CD4-positive, alpha-beta memory T cell (primary cell): ENCODE measurements at regions of chr12 and their contacts with region 1.

Region 1: DNA sequence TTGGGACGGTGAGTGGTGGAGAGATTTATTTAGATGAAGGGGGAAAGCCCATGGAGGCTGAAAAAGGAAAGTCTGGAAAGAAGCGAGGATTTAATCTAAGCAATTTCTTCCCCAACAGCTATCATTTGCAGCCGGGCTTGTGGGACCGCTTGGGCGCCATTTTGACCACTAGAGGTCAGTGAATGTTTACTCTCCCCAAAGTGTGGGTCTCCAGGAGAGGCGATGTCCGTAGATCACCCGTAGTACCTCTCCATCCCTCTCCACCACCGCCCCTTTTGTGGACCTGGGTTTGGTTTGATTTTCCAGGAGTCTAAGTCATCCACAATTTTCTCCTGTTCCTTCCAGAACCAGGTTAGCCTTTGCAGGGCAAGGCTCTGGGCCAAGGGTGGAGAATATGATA is 91.2 kb upstream of the PARP11 start:
- DNase-seq: no peak
- H3K4me3 ChIP-seq: no peak overlapping the region
- H3K4me3 Mint-ChIP-seq: no peak overlapping the region
- H3K27ac ChIP-seq: no peak overlapping the region
- H3K27ac Mint-ChIP-seq: peak overlapping the region in 4 of 7 donors; percentile 8 to 83 (median 48)
- H3K4me1 ChIP-seq: peaks cover 20% of the 10 kb centered on the region
- H3K4me1 Mint-ChIP-seq: peaks cover 18 to 37% (median 26%) of the 10 kb centered on the region in 4 donors
- H3K27me3 ChIP-seq: no peaks in the 10 kb centered on the region
- H3K27me3 Mint-ChIP-seq: no peaks in the 10 kb centered on the region

Region 2: DNA sequence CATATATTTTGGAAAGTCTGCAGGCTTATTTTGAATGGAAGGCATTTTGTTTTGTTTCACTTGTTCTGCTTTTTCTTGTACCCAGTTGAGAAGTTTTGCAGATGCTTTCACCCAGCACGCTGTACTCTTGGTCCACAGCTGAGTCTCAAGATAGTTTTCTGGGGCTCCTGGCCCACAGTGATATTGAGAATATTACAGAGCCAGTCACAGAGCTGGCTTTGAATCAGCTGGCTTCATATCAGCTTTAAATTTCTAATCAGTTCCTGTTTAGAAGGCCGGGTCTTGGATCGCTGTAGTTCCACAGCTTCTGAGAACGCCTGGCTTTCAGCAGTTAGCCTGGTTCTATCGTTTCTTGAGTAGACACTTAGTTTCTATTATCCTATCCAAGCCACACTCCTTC is 58.8 kb before region 1 on chr12:
- CTCF ChIA-PET with region 1: interaction called, 46 read pairs
- POLR2A ChIA-PET with region 1: interaction called, 18 read pairs
- intact Hi-C with region 1: no loop called
- DNase-seq: no peak
- H3K4me3 ChIP-seq: peak overlapping the region; percentile 34 to 36
- H3K4me3 Mint-ChIP-seq: peak overlapping the region; percentile 57 to 91 (median 86)
- H3K27ac ChIP-seq: peak overlapping the region; percentile 20
- H3K27ac Mint-ChIP-seq: peak overlapping the region; percentile 63 to 94 (median 83)
- H3K4me1 ChIP-seq: peaks cover 33% of the 10 kb centered on the region
- H3K4me1 Mint-ChIP-seq: peaks cover 23 to 45% (median 30%) of the 10 kb centered on the region in 4 donors
- H3K27me3 ChIP-seq: no peaks in the 10 kb centered on the region
- H3K27me3 Mint-ChIP-seq: no peaks in the 10 kb centered on the region

Region 3: DNA sequence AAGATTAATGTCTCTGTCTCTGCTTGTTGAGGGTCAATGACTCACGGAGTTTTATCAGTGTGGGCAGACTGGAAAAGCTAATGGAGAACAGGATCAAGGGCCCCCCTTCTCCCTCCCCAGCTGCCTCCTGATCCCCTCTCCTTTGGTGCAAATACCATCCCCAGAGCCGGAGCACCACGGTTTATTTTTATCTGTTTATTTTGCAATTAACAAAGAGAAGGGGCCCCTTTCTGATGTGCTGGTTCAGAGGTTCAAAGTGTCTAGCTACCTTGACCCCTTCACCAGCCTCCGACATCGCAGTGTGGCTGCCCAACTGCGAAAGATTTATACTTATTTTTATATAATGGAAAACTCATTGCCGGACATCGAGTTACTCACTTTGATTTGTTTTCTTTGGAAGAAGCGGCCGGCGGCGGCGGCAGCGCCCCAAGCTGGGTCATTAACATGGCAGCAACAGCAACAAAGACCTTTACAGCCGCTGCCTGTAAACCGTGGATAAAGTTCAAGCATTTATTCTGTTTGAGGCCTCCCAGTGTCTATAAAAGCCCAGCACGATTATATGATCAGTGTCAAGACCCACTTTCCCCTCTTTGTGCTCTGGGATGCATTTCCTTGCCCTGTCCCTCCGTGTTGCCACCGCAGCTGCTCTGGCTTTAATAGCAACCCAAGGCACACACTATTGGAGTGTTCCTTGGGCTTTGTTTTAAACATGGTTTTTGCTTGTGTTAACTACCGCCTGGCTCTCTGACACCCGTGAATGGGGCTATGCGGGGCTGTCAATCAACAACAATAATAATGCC is 43.9 kb before region 1 on chr12:
- CTCF ChIA-PET with region 1: interaction called, 25 read pairs
- POLR2A ChIA-PET with region 1: interaction called, 10 read pairs
- intact Hi-C with region 1: no loop called
- DNase-seq: no peak
- H3K4me3 ChIP-seq: no peak overlapping the region
- H3K4me3 Mint-ChIP-seq: no peak overlapping the region
- H3K27ac ChIP-seq: no peak overlapping the region
- H3K27ac Mint-ChIP-seq: no peak overlapping the region
- H3K4me1 ChIP-seq: peaks cover 9% of the 10 kb centered on the region
- H3K4me1 Mint-ChIP-seq: peaks cover 13 to 20% (median 16%) of the 10 kb centered on the region in 4 donors
- H3K27me3 ChIP-seq: no peaks in the 10 kb centered on the region
- H3K27me3 Mint-ChIP-seq: no peaks in the 10 kb centered on the region

Region 4: GRCh38 chr12:3935078-3935477 is 29.4 kb before region 1 on chr12:
- CTCF ChIA-PET with region 1: interaction called, 36 read pairs
- POLR2A ChIA-PET with region 1: interaction called, 24 read pairs
- intact Hi-C with region 1: loop called (anchors 1 kb)
- DNase-seq: peak in 4 of 5 donors; percentile 51 to 69 (median 58)
- H3K4me3 ChIP-seq: peak overlapping the region; percentile 21 to 32
- H3K4me3 Mint-ChIP-seq: peak overlapping the region; percentile 27 to 97 (median 84)
- H3K27ac ChIP-seq: no peak overlapping the region
- H3K27ac Mint-ChIP-seq: peak overlapping the region; percentile 39 to 99 (median 92)
- H3K4me1 ChIP-seq: peaks cover 55% of the 10 kb centered on the region
- H3K4me1 Mint-ChIP-seq: peaks cover 43 to 72% (median 54%) of the 10 kb centered on the region in 4 donors
- H3K27me3 ChIP-seq: no peaks in the 10 kb centered on the region
- H3K27me3 Mint-ChIP-seq: no peaks in the 10 kb centered on the region

Region 5: GRCh38 chr12:3988519-3989448 is 24.3 kb after region 1 on chr12:
- CTCF ChIA-PET with region 1: interaction called, 49 read pairs
- POLR2A ChIA-PET with region 1: interaction called, 37 read pairs
- intact Hi-C with region 1: no loop called
- DNase-seq: peak in 4 of 5 donors; percentile 40 to 50 (median 43)
- H3K4me3 ChIP-seq: peak overlapping the region in 1 of 2 donors; percentile 2
- H3K4me3 Mint-ChIP-seq: peak overlapping the region in 7 of 8 donors; percentile 45 to 88 (median 66)
- H3K27ac ChIP-seq: peak overlapping the region; percentile 6
- H3K27ac Mint-ChIP-seq: peak overlapping the region; percentile 56 to 94 (median 90)
- H3K4me1 ChIP-seq: peaks cover 24% of the 10 kb centered on the region
- H3K4me1 Mint-ChIP-seq: peaks cover 18 to 33% (median 25%) of the 10 kb centered on the region in 4 donors
- H3K27me3 ChIP-seq: no peaks in the 10 kb centered on the region
- H3K27me3 Mint-ChIP-seq: peaks cover 0 to 2% of the 10 kb centered on the region in 2 donors

Region 6: DNA sequence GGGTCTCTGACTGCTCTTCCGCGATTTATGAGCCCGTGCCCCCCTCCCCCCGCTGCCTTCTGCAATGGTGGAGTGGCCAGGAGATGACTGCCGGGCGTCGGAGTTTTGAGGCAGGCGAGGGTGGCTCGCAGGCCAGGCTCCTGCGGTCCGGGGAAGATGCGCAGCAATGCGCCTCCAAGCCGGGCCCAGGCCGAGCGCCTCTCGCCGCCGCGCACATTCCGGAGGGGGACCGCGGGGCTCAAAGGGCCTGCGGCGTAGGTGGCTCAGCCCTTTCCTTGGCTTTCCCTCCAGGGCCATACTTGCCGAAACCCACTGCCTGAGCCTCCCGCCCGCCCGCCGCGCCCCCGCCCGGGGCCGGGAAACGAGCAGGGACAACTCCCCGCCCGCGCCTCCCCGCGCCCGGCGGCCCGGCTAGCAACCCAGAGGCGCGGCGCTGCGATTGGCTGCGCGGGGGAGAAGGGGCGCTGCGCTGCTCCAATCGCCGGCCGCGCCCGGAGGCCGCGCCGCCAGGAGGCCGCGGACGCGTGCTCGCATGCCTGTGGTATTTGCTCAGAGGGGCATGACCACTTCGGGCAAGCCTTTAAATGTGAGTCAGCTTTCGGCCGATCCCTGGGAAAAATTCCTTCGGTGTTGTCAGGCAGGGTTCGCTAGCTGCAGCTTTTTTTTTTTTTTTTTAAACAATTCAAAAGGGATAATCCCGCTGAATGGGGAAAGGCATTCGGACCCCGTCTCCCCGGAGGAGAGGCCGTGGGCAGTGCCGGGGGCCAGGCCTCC is 66.7 kb after region 1 on chr12:
- CTCF ChIA-PET with region 1: interaction called, 52 read pairs
- POLR2A ChIA-PET with region 1: interaction called, 7 read pairs
- intact Hi-C with region 1: loop called (anchors 2 kb)
- DNase-seq: peak; percentile 67 to 76 (median 70)
- H3K4me3 ChIP-seq: peak overlapping the region in 1 of 2 donors; percentile 52
- H3K4me3 Mint-ChIP-seq: peak overlapping the region; percentile 75 to 87 (median 78)
- H3K27ac ChIP-seq: no peak overlapping the region
- H3K27ac Mint-ChIP-seq: peak overlapping the region; percentile 45 to 90 (median 82)
- H3K4me1 ChIP-seq: peaks cover 34% of the 10 kb centered on the region
- H3K4me1 Mint-ChIP-seq: peaks cover 27 to 45% (median 35%) of the 10 kb centered on the region in 4 donors
- H3K27me3 ChIP-seq: no peaks in the 10 kb centered on the region
- H3K27me3 Mint-ChIP-seq: no peaks in the 10 kb centered on the region

Region 7: DNA sequence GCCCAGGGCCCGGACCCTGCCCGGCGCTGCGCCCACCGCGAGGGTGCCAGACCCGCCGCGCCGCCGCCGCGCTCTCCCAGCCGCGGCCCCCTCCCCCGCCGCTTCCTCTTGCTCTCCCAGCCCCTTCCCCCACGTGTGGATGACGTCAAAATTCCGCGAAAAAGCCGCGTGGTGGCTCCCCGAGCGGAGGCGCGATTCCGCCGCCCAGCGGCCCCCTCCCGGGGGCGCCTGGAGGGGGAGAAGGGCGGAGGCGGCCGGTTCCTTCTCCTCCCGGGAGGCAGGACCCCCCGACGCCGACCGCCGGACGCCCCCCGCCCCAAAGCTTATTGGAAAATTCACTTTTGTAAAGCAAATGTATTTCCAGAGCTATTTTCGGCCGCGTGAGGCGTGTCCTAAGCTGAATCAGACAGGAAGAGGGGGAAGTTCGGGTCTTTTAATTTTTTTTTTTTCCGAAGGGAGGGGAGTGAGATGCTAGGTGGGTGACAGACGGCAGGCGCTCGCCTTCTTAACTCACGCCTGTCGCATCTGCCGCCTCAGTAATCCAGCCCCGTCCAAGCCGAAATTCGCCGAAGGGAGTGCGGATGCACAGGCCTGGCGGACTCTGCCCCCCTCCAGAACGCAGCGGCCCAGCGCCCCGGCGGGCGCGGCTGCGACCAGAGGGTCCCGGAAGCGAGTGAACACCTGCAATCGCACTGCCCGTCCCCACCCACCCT is 305.0 kb after region 1 on chr12:
- CTCF ChIA-PET with region 1: interaction called, 76 read pairs
- POLR2A ChIA-PET with region 1: interaction called, 48 read pairs
- intact Hi-C with region 1: no loop called
- DNase-seq: peak; percentile 91 to 96 (median 93)
- H3K4me3 ChIP-seq: peak overlapping the region; percentile 79 to 84
- H3K4me3 Mint-ChIP-seq: peak overlapping the region; percentile 96 to 100 (median 98)
- H3K27ac ChIP-seq: peak overlapping the region; percentile 91
- H3K27ac Mint-ChIP-seq: peak overlapping the region; percentile 95 to 100 (median 98)
- H3K4me1 ChIP-seq: peaks cover 34% of the 10 kb centered on the region
- H3K4me1 Mint-ChIP-seq: peaks cover 13 to 49% (median 19%) of the 10 kb centered on the region in 4 donors
- H3K27me3 ChIP-seq: no peaks in the 10 kb centered on the region
- H3K27me3 Mint-ChIP-seq: peaks cover 1 to 6% of the 10 kb centered on the region in 2 donors